ENCODE measurements at regions of chr6 and their contacts with region 1.

Region 1: DNA sequence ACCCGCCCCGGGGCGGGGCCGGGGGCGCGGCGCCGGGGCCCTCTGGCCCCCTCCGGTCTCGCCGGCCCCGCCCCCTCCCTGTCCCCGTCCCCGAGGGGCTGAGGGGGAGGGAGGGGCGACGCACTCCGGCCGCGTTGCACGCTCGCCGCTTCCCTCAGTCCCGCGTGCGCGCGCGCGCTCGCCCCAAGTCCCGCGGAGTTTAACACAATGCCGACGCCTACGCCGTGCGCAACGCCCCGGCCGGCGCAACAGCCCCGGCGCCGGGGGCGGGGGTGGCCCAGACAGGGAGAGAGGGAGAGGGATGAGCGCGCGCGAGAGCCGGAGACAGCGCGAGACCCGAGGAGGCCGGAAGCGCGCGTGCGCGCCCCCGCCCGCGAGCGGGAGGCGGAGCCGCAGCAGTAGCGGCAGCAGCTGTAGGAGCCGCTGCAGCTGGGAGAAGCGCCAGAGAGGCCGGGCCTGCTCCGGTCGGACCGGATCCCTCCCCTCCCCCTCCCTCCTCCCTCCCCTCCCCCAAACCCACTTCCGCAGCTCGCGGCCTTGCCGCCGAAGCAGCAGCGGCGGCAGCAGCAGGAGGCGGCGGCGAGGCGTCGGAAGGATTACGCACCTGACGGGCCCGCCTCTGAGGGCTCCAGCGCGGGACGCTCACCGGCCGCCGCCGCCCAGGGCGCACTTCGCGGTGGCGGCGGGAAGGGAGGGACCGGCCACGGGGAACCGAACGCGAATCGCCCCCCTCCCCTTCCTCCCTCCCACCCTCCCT is 905 bp downstream of the ZBTB2 start:
- DNase-seq: peak; percentile 99
- H3K4me3 Mint-ChIP-seq: peak overlapping the region; percentile 97
- H3K27ac Mint-ChIP-seq: peak overlapping the region; percentile 95
- H3K4me1 Mint-ChIP-seq: peaks cover 48% of the 10 kb centered on the region
- H3K27me3 Mint-ChIP-seq: no peaks in the 10 kb centered on the region

Region 2: GRCh38 chr6:149746147-149746946 is 1644.1 kb before region 1 on chr6 and contains the start of gene NUP43:
- intact Hi-C with region 1: loop called (anchors 10 kb)
- DNase-seq: peak; percentile 98
- H3K4me3 Mint-ChIP-seq: peak within 1 kb of the TSS; percentile 99
- H3K27ac Mint-ChIP-seq: peak within 1 kb of the TSS; percentile 94
- H3K4me1 Mint-ChIP-seq: peaks cover 20% of the 10 kb centered on the region
- H3K27me3 Mint-ChIP-seq: no peaks in the 10 kb centered on the region
- total RNA-seq, gene NUP43: 78.9 and 93.7 TPM in 2 replicates

Region 3: DNA sequence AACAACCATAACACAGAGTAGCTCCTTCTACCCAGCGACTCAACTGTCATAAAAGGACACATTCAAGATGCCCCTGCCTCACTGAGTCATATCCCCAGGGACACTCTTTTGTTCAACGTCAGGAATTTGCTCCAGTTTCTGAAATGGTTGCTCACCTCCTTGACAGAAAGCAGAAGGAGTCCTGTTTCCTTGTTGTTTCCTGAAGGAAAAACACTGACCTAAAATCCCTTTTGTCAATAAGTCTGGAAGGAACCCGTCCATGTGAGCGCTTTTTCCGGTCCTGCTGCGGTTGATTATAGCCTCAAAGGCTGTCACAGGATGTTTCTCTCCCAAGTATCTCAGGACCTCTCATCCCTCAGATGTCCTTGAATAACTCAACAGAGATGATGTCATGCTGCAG is 904.4 kb before region 1 on chr6:
- intact Hi-C with region 1: no loop called
- DNase-seq: no peak
- H3K4me3 Mint-ChIP-seq: no peak overlapping the region
- H3K27ac Mint-ChIP-seq: no peak overlapping the region
- H3K4me1 Mint-ChIP-seq: peaks cover under 1% of the 10 kb centered on the region
- H3K27me3 Mint-ChIP-seq: peaks cover 6% of the 10 kb centered on the region

Region 4: GRCh38 chr6:151372164-151372563 is 18.3 kb before region 1 on chr6:
- intact Hi-C with region 1: loop called (anchors 1 kb)
- DNase-seq: peak; percentile 74
- H3K4me3 Mint-ChIP-seq: peak overlapping the region; percentile 81
- H3K27ac Mint-ChIP-seq: peak overlapping the region; percentile 91
- H3K4me1 Mint-ChIP-seq: peaks cover 51% of the 10 kb centered on the region
- H3K27me3 Mint-ChIP-seq: no peaks in the 10 kb centered on the region

Region 5: GRCh38 chr6:151451950-151452749 is 61.7 kb after region 1 on chr6 and contains the start of gene RMND1:
- intact Hi-C with region 1: loop called (anchors 1 kb)
- DNase-seq: peak; percentile 100
- H3K4me3 Mint-ChIP-seq: peak within 1 kb of the TSS; percentile 97
- H3K27ac Mint-ChIP-seq: peak within 1 kb of the TSS; percentile 96
- H3K4me1 Mint-ChIP-seq: peaks cover 37% of the 10 kb centered on the region
- H3K27me3 Mint-ChIP-seq: peaks cover 3% of the 10 kb centered on the region
- total RNA-seq, gene RMND1: 22.2 and 22.9 TPM in 2 replicates

Region 6: DNA sequence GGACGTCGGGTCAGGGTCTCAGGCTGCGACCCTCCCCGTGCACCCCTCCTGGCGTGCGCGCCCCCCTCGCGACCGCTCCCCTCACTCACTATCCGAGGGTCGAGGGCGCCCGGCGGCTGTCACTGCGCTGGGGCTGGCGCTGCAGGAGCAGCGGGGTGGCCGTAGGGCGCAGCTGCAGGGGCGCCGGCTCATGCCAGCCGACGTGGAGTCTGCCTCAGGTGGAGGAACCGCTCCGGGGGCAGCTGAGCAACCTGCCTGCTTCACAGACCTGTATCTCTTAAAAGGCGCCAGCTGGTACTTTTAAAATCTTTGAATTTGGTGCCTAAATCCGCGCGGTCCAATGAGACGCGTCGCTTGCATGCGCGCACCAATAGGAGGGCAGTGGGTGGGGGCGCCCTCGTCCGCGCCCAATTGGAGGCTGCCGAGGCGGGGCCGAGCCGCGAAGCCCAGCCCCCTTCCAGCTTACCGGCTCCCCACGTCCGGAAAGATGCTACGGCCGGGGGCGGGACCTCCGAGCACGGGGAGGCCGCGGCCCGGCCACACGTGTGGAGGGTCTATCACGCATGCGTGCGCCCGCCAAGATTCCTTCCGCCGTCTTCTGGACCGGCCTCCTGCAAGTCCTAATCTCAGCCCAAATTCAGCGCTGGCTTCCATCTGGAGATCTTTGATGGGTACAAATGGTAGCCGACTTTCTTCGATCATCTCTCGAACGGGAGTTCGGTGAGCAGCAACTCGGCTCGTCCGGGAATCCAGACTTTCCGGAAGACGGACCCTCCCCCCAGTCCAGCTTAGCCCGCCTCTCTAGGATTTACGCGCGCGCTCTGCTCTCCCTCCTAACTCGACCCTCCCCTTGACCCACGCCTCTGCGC is 1592.5 kb after region 1 on chr6 and contains the start of gene FBXO5:
- intact Hi-C with region 1: loop called (anchors 2 kb)
- DNase-seq: peak; percentile 99
- H3K4me3 Mint-ChIP-seq: peak within 1 kb of the TSS; percentile 92
- H3K27ac Mint-ChIP-seq: peak within 1 kb of the TSS; percentile 100
- H3K4me1 Mint-ChIP-seq: peaks cover 46% of the 10 kb centered on the region
- H3K27me3 Mint-ChIP-seq: no peaks in the 10 kb centered on the region
- total RNA-seq, gene FBXO5: 34.9 and 36.4 TPM in 2 replicates